ENCODE measurements at regions of chr18 and their contacts with region 1.

Region 1: DNA sequence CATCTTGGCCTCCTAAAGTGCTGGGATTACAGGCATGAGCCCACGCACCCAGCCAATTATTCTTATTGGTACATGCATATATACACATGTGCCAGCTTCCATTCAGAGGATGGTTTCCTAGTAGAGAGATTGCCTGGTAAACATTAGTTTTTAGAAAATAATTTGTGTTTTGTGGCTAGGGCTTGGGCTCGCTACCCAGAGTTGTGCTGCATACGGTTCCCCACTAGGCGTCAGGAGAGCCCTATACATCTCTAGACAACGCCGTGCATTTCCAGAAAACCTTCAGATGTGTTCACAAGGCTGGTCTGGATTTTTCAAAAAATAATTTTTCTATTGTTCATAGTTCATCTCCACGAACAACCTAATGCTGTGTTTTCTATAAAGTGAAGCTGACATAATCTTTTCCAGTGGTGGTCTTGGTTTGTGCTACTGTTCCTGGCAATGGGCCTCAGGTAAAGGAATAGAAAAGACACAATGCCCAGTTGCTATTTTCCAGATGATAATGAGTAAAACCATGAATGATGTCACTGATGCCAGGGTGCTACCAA is 14.7 kb upstream of the AFG3L2 start:
- DNase-seq: peak; percentile 65
- H3K4me3 ChIP-seq: no peak overlapping the region
- H3K27ac ChIP-seq: no peak overlapping the region
- H3K4me1 ChIP-seq: peaks cover 3% of the 10 kb centered on the region
- H3K27me3 ChIP-seq: no peaks in the 10 kb centered on the region
- CTCF ChIP-seq: peak; percentile 89

Region 2: GRCh38 chr18:12442946-12443345 is 51.3 kb after region 1 on chr18:
- intact Hi-C with region 1: no loop called
- DNase-seq: no peak
- H3K4me3 ChIP-seq: no peak overlapping the region
- H3K27ac ChIP-seq: no peak overlapping the region
- H3K4me1 ChIP-seq: no peaks in the 10 kb centered on the region
- H3K27me3 ChIP-seq: no peaks in the 10 kb centered on the region
- CTCF ChIP-seq: no peak

Region 3: GRCh38 chr18:12531749-12532148 is 140.1 kb after region 1 on chr18:
- intact Hi-C with region 1: loop called (anchors 10 kb)
- DNase-seq: no peak
- H3K4me3 ChIP-seq: no peak overlapping the region
- H3K27ac ChIP-seq: no peak overlapping the region
- H3K4me1 ChIP-seq: no peaks in the 10 kb centered on the region
- H3K27me3 ChIP-seq: no peaks in the 10 kb centered on the region
- CTCF ChIP-seq: no peak

Region 4: DNA sequence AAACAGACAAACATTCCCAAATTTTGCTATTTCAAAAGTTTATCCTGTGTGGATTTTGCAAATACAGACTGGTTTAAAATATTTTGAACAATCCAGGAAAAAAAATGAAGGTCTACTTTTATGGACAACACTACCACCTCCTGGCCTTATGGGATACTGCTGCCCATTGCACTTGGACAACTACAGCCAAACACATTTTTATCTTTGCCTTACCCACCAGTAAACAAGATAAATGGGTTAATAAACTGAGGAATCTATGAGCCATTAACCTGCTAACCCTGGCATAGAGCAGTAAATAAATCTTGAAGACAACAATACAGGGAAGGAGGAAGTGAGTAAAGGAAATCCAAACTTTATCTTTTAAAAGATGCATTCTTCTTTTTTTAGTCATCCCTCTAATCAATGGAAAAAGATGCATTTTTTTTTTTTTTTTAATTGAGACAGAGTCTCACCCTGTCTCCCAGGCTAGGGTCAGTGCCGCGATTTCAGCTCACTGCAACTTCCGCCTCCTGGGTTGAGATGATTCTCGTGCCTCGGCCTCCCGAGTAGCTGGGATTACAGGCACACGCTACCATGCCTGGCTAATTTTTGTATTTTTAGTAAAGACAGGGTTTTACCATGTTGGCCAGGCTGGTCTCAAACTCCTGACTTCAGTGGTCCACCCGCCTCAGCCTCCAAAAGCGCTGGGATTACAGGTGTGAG is 268.4 kb after region 1 on chr18:
- intact Hi-C with region 1: loop called (anchors 2 kb)
- DNase-seq: peak; percentile 50
- H3K4me3 ChIP-seq: no peak overlapping the region
- H3K27ac ChIP-seq: no peak overlapping the region
- H3K4me1 ChIP-seq: no peaks in the 10 kb centered on the region
- H3K27me3 ChIP-seq: no peaks in the 10 kb centered on the region
- CTCF ChIP-seq: peak; percentile 84

Measured in colonic mucosa (tissue), 4 donors.